ENCODE measurements at regions of chr5 and their contacts with region 1.

Region 1: GRCh38 chr5:1167728-1168709 is 33.4 kb upstream of the SLC6A19 start:
- DNase-seq: peak; percentile 86
- H3K4me3 ChIP-seq: peak overlapping the region; percentile 26 to 49; a peak in 2 of 4 replicates
- H3K27ac ChIP-seq: no peak overlapping the region
- H3K4me1 ChIP-seq: peaks cover 0 to 8% of the 10 kb centered on the region in 2 experiments; a peak in 1 of 4 replicates
- H3K27me3 ChIP-seq: no peaks in the 10 kb centered on the region
- CTCF ChIP-seq: peak; percentile 65
- EP300 ChIP-seq: no peak
- RAD21 ChIP-seq: peak; percentile 87

Region 2: GRCh38 chr5:923281-923873 is 244.6 kb before region 1 on chr5:
- CTCF ChIA-PET with region 1: interaction called, 119 read pairs
- POLR2A ChIA-PET with region 1: no interaction called
- DNase-seq: peak; percentile 94
- H3K4me3 ChIP-seq: peak overlapping the region in 1 of 2 experiments; percentile 7; a peak in 1 of 4 replicates
- H3K27ac ChIP-seq: no peak overlapping the region
- H3K4me1 ChIP-seq: no peaks in the 10 kb centered on the region
- H3K27me3 ChIP-seq: no peaks in the 10 kb centered on the region
- CTCF ChIP-seq: peak; percentile 83
- EP300 ChIP-seq: no peak
- RAD21 ChIP-seq: peak; percentile 91

Region 3: GRCh38 chr5:989961-990530 is 178.0 kb before region 1 on chr5:
- CTCF ChIA-PET with region 1: interaction called, 11 read pairs
- POLR2A ChIA-PET with region 1: no interaction called
- DNase-seq: peak; percentile 48
- H3K4me3 ChIP-seq: no peak overlapping the region
- H3K27ac ChIP-seq: no peak overlapping the region
- H3K4me1 ChIP-seq: no peaks in the 10 kb centered on the region
- H3K27me3 ChIP-seq: no peaks in the 10 kb centered on the region
- CTCF ChIP-seq: no peak
- EP300 ChIP-seq: no peak
- RAD21 ChIP-seq: peak; percentile 20; the same call in 1 of the 2 replicates

Region 4: GRCh38 chr5:1033606-1034420 is 134.2 kb before region 1 on chr5:
- CTCF ChIA-PET with region 1: interaction called, 13 read pairs
- POLR2A ChIA-PET with region 1: no interaction called
- DNase-seq: peak; percentile 16
- H3K4me3 ChIP-seq: no peak overlapping the region
- H3K27ac ChIP-seq: no peak overlapping the region
- H3K4me1 ChIP-seq: no peaks in the 10 kb centered on the region; a peak in 1 of 4 replicates
- H3K27me3 ChIP-seq: no peaks in the 10 kb centered on the region
- CTCF ChIP-seq: no peak
- EP300 ChIP-seq: no peak
- RAD21 ChIP-seq: no peak

Region 5: DNA sequence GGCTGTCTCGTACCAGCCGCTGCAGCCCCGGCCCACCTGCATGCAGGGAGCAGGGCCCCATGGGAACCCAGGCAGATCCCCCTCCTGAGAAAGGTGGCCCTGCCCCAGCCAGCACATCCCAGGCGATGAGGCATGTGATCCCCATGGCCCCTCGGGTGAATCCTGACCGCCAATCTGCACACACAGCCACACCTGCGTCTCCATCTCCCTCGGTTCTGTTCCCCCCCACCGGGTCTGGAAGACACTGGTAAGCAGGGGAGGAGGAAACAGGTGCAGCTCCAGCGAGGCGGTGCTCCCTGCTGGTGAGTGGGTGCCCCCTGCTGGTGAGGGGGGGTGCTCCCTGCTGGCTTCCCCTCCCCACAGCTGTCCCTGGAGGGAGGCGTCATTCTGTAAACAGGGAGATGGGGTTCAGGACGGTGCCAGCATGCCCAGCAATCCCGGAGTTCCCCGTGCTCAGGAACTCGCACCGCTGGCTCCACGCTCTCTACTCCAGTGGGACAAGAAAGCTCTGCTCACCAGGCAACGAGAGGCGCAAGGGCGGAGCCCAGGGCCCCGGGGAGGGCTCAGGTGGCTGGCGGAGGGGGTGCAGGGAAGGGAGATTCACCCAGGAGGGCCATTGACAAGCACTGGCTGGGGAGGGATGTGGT is 27.7 kb before region 1 on chr5:
- CTCF ChIA-PET with region 1: interaction called, 49 read pairs
- POLR2A ChIA-PET with region 1: no interaction called
- DNase-seq: peak; percentile 87
- H3K4me3 ChIP-seq: no peak overlapping the region
- H3K27ac ChIP-seq: no peak overlapping the region
- H3K4me1 ChIP-seq: no peaks in the 10 kb centered on the region; a peak in 1 of 4 replicates
- H3K27me3 ChIP-seq: no peaks in the 10 kb centered on the region
- CTCF ChIP-seq: peak; percentile 62
- EP300 ChIP-seq: no peak
- RAD21 ChIP-seq: peak; percentile 75

Region 6: DNA sequence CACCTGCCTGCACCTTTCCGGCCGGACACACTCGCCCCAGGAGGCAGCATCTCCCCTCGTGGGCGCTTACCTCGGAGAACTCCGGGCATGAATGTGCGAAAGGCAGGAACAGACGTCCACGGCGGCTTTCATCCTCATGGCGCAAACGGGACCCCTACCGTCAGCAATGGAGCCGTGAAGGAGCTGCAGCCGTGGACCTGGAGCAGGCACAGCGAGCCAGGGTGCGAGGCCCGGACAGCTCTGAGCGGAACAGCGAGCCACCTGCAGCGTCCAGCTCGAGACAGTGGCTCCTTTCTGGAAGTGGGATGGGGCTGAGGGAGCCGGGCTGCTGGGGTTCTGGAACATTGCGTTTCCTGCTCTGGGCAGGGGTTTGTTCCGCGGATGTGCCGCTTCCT is 25.6 kb after region 1 on chr5:
- CTCF ChIA-PET with region 1: interaction called, 41 read pairs
- POLR2A ChIA-PET with region 1: no interaction called
- DNase-seq: no peak
- H3K4me3 ChIP-seq: no peak overlapping the region
- H3K27ac ChIP-seq: no peak overlapping the region
- H3K4me1 ChIP-seq: no peaks in the 10 kb centered on the region
- H3K27me3 ChIP-seq: peaks cover 45% of the 10 kb centered on the region; the same call in 1 of the 2 replicates
- CTCF ChIP-seq: no peak
- EP300 ChIP-seq: no peak
- RAD21 ChIP-seq: no peak

Measured in SK-N-SH (cell line).